Activated T-helper 1 cell treated with anti-CD3 and anti-CD28 coated beads, Interleukin-12 subunit alpha, Interleukin-12 subunit beta, Interleukin-2, Interleukin-4 antibody, amounts not matched to agents 30 ng/mL and 10 ng/mL and 1 ng/mL, durations not matched to agents 14 hours and 24 hours and 36 hours (primary cell): ENCODE measurements at regions of chr12 and their contacts with region 1.

Region 1: GRCh38 chr12:108803428-108804105 is 53.8 kb downstream of the SSH1 start:
- DNase-seq: peak; percentile 54
- H3K4me3 Mint-ChIP-seq: no peak overlapping the region
- H3K27ac Mint-ChIP-seq: peak overlapping the region; percentile 77
- H3K4me1 Mint-ChIP-seq: peaks cover 5% of the 10 kb centered on the region
- H3K27me3 Mint-ChIP-seq: no peaks in the 10 kb centered on the region

Region 2: DNA sequence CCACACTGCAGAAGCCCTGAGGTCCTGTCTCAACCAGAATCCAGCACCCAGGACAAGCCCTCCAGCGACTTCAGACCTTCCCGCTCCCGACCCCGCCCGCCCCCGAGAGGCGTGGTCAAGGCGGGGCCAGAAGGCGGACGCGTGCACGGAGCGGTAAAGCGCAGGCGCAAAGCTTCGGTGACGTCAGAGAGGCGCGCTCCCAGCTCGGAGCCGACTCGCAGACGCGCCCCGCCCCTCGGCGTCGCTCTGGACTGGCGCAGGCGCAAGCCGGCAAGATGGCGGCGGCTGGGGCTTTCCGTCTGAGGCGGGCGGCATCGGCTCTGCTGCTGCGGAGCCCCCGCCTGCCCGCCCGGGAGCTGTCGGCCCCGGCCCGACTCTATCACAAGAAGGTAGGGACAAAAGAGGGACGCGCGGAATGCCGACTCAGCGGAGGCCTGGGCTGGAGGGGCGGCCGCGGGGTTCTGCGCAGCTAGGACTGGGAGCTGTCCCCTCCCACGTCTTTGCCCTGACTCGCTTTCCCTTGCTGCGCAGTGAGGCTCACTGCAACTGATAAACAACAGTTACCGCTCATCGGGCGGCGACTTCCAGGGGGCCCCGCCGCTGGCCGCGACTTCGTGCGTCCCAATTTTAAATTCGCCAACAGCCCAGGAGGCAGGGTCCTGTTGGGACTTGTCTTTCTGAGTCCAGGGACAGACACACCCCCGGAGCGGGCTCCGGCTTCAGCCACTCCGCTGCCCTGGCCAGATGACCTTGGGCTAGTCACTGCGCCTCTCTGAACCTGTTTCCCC is 241.0 kb before region 1 on chr12 and contains the start of gene ISCU:
- intact Hi-C with region 1: loop called (anchors 1 kb)
- DNase-seq: peak; percentile 99
- H3K4me3 Mint-ChIP-seq: peak within 1 kb of the TSS; percentile 100
- H3K27ac Mint-ChIP-seq: peak within 1 kb of the TSS; percentile 99
- H3K4me1 Mint-ChIP-seq: peaks cover 58% of the 10 kb centered on the region
- H3K27me3 Mint-ChIP-seq: no peaks in the 10 kb centered on the region
- total RNA-seq, gene ISCU: 73.8 and 74.9 TPM in 2 replicates

Region 3: GRCh38 chr12:108611884-108612415 is 191.6 kb before region 1 on chr12:
- intact Hi-C with region 1: loop called (anchors 1 kb)
- DNase-seq: peak; percentile 16
- H3K4me3 Mint-ChIP-seq: no peak overlapping the region
- H3K27ac Mint-ChIP-seq: peak overlapping the region; percentile 1
- H3K4me1 Mint-ChIP-seq: peaks cover 37% of the 10 kb centered on the region
- H3K27me3 Mint-ChIP-seq: peaks cover 2% of the 10 kb centered on the region

Region 4: DNA sequence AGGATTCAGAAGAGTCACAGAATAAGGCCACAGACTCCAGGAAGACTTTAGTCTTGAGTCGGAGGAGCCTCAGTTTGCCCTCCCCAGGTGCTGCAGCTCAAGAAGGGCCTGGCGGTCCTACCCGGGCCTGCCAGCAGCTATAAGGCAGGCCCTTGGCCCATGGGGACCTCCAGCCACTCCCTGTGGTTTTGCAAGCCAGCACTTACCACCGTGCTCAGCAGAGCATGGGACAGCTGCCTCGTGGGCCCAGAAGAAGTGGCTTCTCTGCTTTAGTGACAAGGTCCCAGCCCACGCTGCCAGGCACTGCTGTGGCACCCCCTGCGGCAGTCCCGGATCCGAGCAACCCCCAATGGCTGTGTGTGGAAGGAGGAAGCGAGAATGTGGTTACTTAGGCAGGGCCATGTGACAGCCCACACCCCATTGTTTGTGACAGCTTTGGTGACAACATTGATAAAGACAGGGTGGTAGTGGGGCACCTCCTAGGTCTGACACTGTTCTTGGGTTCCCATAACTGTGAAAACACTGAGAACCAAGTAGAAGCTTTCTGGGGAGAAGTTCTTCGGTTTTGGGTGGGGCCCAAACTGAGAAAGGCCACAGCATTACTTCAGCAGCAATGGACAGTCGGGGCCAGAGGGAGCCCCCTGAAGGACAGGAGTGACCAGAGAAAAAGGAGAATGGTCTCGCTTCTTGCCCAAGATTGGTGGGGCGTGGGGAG is 169.9 kb before region 1 on chr12 and contains the start of gene SELPLG:
- intact Hi-C with region 1: loop called (anchors 1 kb)
- DNase-seq: peak; percentile 82
- H3K4me3 Mint-ChIP-seq: peak within 1 kb of the TSS; percentile 94
- H3K27ac Mint-ChIP-seq: peak within 1 kb of the TSS; percentile 99
- H3K4me1 Mint-ChIP-seq: peaks cover 69% of the 10 kb centered on the region
- H3K27me3 Mint-ChIP-seq: no peaks in the 10 kb centered on the region
- total RNA-seq, gene SELPLG: 51.9 and 53.5 TPM in 2 replicates

Region 5: GRCh38 chr12:108691175-108691997 is 112.2 kb before region 1 on chr12:
- intact Hi-C with region 1: loop called (anchors 1 kb)
- DNase-seq: peak; percentile 50
- H3K4me3 Mint-ChIP-seq: peak overlapping the region; percentile 74
- H3K27ac Mint-ChIP-seq: peak overlapping the region; percentile 95
- H3K4me1 Mint-ChIP-seq: peaks cover 64% of the 10 kb centered on the region
- H3K27me3 Mint-ChIP-seq: no peaks in the 10 kb centered on the region

Region 6: GRCh38 chr12:108826101-108826806 is 22.7 kb after region 1 on chr12:
- intact Hi-C with region 1: no loop called
- DNase-seq: no peak
- H3K4me3 Mint-ChIP-seq: peak overlapping the region; percentile 48
- H3K27ac Mint-ChIP-seq: peak overlapping the region; percentile 53
- H3K4me1 Mint-ChIP-seq: peaks cover 60% of the 10 kb centered on the region
- H3K27me3 Mint-ChIP-seq: no peaks in the 10 kb centered on the region

Region 7: GRCh38 chr12:108856428-108857157 is 53.0 kb after region 1 on chr12:
- intact Hi-C with region 1: loop called (anchors 1 kb)
- DNase-seq: peak; percentile 45
- H3K4me3 Mint-ChIP-seq: peak overlapping the region; percentile 96
- H3K27ac Mint-ChIP-seq: peak overlapping the region; percentile 96
- H3K4me1 Mint-ChIP-seq: peaks cover 52% of the 10 kb centered on the region
- H3K27me3 Mint-ChIP-seq: peaks cover 10% of the 10 kb centered on the region

Region 8: DNA sequence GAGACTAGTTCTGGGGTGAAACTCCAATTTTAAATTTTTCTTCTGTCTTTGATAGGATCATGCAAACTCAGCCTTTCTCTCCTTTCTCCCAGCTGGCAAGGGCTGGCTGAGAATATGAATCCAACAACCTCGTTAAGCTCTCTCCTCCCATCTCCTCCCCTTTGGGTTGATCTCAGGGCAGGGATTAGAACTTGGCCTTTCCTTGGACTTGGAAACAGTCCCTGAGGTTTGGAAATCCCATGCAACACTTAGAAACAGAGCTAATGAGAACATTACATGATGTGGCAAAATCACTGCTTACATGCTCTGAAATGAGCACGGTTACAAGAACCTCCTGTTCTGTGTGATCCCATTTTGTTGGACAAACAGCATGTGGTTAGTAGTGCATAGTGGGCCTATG is 344.4 kb after region 1 on chr12:
- intact Hi-C with region 1: no loop called
- DNase-seq: no peak
- H3K4me3 Mint-ChIP-seq: no peak overlapping the region
- H3K27ac Mint-ChIP-seq: no peak overlapping the region
- H3K4me1 Mint-ChIP-seq: peaks cover 2% of the 10 kb centered on the region
- H3K27me3 Mint-ChIP-seq: peaks cover 13% of the 10 kb centered on the region